Naive thymus-derived CD4-positive, alpha-beta T cell (primary cell): ENCODE measurements at regions of chr15 and their contacts with region 1.

Region 1: DNA sequence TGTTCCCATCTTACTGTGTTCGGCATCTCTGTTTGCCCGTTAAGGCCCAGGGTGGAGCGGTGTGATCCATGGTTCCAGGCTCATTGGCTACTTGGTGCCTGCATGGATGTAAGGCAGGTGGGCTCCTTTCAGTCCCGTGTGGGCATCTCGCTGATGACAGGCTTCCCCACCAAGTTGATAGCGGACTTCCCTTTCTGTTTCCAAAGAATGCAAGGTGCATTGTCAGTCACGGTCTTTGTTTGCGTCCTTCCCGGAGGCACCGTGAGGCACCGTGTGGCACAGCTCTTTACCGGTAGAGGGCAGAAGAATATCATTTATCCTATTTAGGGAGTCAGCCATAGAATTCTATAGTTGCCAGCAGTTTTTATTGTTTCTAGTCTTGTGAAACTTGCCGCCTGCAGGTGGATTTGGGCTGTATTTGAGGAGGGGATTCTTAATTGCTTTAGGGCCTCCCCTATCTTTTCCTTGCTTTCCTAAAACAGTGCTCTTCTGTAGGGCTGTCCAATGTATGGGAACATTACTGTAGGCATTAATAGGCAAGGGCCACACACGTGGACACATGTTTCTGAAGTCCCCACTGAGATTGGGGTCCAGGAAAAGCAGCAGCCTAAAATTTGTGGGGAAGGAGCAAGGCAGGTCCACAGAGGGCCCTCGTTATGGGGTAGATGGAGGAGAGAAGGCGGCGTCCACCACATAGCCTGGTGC is 244.1 kb downstream of the SLCO3A1 start:
- DNase-seq: peak in 7 of 9 donors; percentile 7 to 40 (median 29)
- ATAC-seq: peak; percentile 69
- H3K4me3 ChIP-seq: no peak overlapping the region
- H3K4me3 Mint-ChIP-seq: peak overlapping the region in 6 of 10 donors; percentile 10 to 53 (median 28)
- H3K27ac ChIP-seq: no peak overlapping the region
- H3K27ac Mint-ChIP-seq: peak overlapping the region in 4 of 9 donors; percentile 6 to 79 (median 70)
- H3K4me1 ChIP-seq: peaks cover 8 to 39% of the 10 kb centered on the region in 2 donors
- H3K4me1 Mint-ChIP-seq: peaks cover 30 to 68% (median 42%) of the 10 kb centered on the region in 7 donors
- H3K27me3 ChIP-seq: no peaks in the 10 kb centered on the region
- H3K27me3 Mint-ChIP-seq: no peaks in the 10 kb centered on the region

Region 2: DNA sequence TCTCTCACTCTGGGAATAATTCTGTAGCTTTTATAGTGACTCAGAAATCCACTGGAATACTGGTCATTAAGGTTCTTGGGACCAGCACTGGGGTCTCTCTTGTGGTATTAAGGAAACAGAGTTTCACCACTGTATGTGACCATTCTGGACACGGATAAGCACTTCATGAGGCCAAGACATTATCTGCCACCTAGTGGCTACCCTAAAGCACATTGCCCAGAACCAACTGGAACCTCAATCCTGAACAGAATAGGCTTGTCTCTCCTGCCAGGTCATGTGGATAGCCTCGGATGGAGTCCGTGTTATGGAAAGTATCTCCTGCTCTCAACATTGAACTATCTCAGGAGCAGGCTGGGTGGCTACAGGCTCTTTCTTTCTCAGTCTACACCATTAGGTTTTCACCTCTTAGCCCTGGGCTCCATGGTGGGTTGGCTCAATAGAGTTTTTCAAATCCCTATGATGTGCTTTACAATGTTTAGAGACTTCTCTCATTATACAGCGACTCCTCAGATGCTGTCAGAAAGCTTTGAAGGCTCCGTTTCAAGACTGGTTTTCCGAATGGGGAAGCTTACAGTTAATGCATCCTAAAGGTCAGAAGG is 128.5 kb after region 1 on chr15:
- CTCF ChIA-PET with region 1: no interaction called
- POLR2A ChIA-PET with region 1: no interaction called
- intact Hi-C with region 1: loop called in 1 of 2 experiments (anchors 1 kb)
- DNase-seq: no peak
- ATAC-seq: no peak
- H3K4me3 ChIP-seq: no peak overlapping the region
- H3K4me3 Mint-ChIP-seq: no peak overlapping the region
- H3K27ac ChIP-seq: no peak overlapping the region
- H3K27ac Mint-ChIP-seq: no peak overlapping the region
- H3K4me1 ChIP-seq: no peaks in the 10 kb centered on the region
- H3K4me1 Mint-ChIP-seq: no peaks in the 10 kb centered on the region
- H3K27me3 ChIP-seq: no peaks in the 10 kb centered on the region
- H3K27me3 Mint-ChIP-seq: peaks cover 9 to 41% (median 29%) of the 10 kb centered on the region in 5 donors

Region 3: DNA sequence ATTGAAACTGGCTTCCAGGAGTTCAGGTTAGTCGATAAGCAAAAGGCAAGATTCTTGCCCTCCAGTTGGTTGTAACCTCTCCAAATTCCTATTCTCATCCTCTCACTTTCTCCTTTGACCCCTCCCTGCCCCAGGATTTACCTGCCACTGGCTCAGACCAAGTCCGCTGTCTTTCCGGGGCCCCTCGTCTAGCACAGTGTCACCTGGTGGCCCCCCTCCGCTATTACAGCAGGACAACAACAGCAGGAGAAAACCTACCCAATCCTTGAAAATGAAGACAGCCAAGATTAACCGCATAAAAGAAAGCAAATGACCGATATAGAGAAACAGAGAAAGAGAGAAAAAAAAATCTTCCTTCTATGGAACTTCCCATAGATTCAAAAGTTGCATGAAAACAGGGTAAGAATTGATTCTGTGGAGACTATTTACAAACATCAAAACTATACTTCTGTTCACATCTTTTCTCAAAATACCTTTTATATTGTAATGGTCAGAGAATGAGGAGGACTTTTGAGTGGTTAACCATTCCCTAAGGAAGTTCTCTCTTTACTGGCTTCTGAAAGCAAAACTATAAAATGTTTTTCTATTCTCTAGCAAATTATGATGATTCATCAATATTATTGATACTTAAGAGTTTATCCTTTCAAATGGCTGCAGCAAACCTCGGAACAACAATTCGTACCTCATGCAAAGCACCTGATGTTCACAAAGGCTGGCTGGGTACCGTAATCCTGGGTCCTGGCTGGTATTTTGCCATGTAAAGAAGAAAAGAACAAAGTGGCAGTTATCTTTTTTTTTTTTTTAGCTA is 286.1 kb after region 1 on chr15:
- CTCF ChIA-PET with region 1: no interaction called
- POLR2A ChIA-PET with region 1: no interaction called
- intact Hi-C with region 1: loop called in 1 of 2 experiments (anchors 1 kb)
- DNase-seq: peak in 1 of 9 donors; percentile 23
- ATAC-seq: no peak
- H3K4me3 ChIP-seq: no peak overlapping the region
- H3K4me3 Mint-ChIP-seq: no peak overlapping the region
- H3K27ac ChIP-seq: no peak overlapping the region
- H3K27ac Mint-ChIP-seq: no peak overlapping the region
- H3K4me1 ChIP-seq: no peaks in the 10 kb centered on the region
- H3K4me1 Mint-ChIP-seq: peaks cover 0 to 3% (median 0%) of the 10 kb centered on the region in 7 donors
- H3K27me3 ChIP-seq: no peaks in the 10 kb centered on the region
- H3K27me3 Mint-ChIP-seq: peaks cover 33 to 49% (median 45%) of the 10 kb centered on the region in 5 donors